HEK293T (cell line): ENCODE measurements at regions of chr15 and their contacts with region 1.

Region 1: GRCh38 chr15:92881802-92882696 is 18.1 kb upstream of the CHD2 start:
- DNase-seq: peak; percentile 99

Region 2: DNA sequence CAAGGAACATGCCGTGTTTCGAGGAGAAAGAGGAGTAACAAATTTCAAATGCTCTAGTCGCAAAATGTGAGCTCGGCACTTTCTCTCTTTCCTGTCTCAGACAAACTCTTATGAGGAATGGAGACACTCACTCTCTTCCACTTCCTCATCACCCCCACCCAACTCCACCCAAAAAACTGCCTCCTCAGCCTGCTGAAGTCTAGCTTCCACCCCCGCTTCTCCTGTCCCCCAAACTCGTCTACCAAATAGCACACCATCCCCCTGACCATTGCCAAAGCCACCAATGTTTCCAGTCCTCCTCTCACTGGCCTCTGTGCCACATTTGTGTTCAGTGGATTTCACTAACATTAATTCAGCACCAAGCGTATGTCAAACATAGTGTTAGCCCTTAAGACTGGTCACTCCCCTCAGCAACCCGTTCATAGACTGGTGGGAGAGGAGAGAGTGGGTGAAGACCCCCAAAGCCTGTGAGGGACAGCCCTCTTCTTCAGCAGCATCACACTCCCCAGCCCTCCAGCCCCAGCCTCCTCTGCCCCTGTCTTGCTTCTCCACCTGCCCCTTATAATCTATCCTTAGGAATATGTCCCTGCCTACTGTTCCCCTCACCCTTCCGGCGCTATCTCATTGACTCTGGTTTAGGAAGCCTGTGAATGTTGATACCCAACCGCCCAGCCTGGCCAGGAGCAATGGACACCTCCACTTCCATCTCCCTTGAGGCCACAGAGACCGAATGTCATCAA is 303.8 kb before region 1 on chr15:
- CTCF ChIA-PET with region 1: no interaction called
- POLR2A ChIA-PET with region 1: no interaction called
- DNase-seq: no peak

Region 3: DNA sequence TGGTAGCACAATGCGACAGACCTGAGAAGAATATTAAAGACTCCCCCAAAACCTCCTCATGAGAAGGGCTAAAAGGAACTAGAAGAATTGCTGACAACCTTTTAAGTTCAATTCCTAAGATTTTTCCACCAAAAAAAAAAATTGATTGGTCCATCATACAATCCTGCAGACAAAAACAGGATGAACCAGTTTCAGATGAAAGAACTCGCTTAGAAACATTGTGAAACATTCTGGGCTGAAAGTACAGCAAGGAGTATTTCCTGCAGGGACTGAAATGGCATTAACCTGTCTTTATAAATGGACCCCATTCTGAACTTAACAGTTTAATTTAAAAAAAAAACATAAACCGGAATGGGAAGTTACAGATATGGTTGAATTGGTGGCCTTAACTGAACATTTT is 130.5 kb before region 1 on chr15:
- CTCF ChIA-PET with region 1: no interaction called
- POLR2A ChIA-PET with region 1: no interaction called
- DNase-seq: no peak

Region 4: DNA sequence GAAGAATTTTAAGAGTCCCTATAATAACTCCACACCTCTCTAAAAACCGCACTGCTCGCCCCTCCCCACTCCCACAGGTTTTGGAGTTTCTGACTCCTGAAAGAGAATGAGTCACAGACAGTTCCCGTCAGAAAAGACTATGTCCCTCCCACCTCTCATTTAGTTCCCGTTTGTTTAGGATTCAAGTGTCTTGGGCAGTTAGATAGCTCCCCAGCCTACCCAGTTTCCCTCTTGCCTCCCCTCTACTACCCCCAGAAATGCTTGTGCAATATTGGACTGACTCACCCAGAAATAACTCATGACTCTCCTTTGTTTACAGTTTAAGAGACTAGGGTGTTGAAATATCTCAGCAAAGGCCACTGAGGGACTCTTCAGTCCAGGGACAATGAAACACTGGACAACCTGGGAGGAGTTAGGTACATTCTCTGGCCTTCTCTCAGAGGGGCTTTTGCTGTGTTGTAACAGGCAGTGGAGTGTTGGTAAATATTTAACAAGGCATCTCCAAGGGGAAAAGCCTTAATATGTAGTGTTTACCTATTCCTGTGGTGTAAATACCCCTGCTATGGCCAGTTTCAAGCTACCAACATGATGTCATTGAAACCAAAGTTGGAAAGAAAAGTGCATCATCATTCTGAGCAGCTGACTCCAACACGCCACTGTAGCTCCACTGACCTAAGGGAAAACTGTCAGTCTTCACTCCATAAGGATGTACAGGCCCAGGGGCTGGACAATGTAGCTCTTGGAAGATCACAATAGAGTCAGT is 78.0 kb before region 1 on chr15:
- CTCF ChIA-PET with region 1: interaction called, 7 read pairs
- POLR2A ChIA-PET with region 1: interaction called, 191 read pairs
- DNase-seq: no peak

Region 5: GRCh38 chr15:92820236-92821021 is 61.6 kb before region 1 on chr15:
- CTCF ChIA-PET with region 1: interaction called, 3 read pairs
- POLR2A ChIA-PET with region 1: interaction called, 341 read pairs
- DNase-seq: peak; percentile 95

Region 6: DNA sequence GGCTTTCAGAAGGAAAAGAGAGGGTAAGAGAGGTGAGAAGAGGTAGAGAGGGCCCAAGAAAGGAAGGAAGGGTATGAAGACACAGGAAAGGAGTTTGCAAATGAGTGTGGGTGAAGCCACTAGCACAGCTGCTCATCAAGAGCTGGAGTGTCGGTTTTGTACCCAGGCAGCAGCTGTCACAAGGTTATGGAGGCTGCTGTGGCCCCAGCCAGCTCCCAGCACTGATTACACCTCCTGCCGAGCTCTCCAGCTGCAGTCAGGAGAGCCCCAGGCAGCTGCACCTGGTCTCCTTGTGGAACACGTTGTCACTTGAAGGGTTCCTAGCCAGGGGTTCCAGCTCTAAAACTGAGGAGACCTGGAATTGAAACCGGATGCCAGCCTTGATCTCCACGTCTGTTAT is 42.4 kb before region 1 on chr15:
- CTCF ChIA-PET with region 1: no interaction called
- POLR2A ChIA-PET with region 1: interaction called, 172 read pairs
- DNase-seq: no peak

Region 7: GRCh38 chr15:92868992-92869988 is 12.8 kb before region 1 on chr15:
- CTCF ChIA-PET with region 1: no interaction called
- POLR2A ChIA-PET with region 1: interaction called, 35 read pairs
- DNase-seq: no peak

Region 8: DNA sequence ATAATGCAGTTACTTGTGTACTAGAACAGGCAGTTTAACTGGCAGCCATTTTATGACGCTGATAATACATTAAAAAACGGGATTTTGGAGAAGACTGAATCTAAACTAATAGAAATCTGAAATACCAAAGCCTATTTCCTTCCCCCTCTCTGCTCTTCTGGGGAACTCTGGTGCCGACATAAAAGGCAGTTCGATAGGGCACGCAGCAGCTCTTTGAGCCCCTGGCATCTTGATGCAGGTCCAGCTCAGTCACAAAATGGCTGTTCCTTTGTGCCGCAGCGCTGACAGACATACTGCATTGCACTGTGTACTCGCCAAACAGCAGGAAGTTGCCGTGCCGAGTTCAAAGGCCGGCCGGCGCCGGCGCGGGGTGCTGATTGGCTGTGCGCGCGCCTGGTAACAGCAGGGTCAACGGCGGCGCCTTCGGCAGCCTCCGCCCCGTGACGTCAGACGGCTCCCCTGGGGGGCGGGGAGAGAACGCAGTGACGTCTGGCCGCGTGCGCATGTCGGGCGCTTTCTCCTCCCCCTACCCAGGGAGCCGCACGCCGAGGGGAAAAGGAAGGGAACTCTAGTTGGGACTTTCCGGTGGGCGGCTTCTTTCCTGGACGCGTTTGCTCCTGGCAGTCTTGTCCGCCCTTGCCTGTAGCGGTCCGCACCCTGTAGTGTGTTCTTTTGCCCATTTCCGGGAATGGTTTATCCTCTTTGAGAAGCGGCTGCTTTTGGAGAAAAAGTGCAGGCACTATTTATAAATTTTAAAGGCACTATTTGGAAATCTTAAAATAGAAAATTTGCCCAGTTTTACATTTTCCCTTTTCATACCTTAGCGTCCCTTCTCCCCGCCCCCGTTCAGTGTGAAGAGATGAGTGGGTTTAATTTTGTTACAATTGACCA is 22.1 kb after region 1 on chr15:
- CTCF ChIA-PET with region 1: interaction called, 4 read pairs
- POLR2A ChIA-PET with region 1: interaction called, 252 read pairs
- DNase-seq: peak; percentile 92

Region 9: DNA sequence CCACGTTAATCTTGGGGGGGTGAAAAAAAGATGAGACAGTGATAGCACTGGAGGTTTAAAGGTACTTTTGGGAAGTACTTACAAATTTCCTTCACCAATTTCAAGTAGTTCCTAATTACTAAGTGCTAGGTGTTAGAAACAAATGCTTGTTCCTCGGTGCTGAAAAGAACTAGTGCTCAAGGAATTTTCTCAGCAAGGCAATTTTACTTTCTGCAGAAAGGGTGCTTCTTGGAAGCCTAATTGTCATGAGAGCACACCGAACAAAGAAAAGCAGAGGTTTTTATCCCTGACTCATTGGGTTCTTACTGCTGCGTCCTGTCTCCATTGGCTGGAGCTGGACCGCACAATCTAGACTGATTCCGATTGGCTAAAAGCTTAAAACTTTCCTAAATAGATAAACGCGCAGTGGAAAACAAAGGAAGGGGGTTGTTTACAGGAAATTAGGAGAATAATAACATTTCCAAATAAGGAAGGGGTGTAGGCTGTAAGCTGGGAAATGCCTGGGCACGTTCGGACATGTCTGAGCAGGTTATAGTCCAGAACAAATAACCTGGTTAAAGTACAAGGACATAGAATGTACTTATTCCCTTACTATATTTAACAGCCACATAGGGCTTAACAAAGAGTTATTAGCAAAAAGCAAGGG is 67.7 kb after region 1 on chr15:
- CTCF ChIA-PET with region 1: no interaction called
- POLR2A ChIA-PET with region 1: no interaction called
- DNase-seq: no peak

Region 10: DNA sequence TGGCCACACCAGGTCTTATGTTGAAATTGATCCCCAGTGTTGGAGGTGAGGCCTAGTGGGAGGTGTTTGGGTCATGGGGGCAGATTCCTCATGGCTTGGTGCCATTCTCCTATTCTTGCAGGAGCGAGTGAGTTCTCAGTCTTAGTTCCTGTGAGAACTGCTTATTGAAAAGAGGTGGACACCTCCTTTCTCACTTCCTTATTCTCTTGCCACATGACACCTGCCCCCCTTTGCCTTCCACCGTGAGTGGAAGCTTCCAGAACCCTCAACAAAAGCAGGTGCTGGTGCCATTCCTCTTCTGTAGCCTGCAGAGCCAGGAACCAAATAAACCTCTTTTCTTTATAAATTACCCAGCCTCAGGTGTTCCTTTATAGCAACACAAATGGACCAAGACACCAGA is 1031.3 kb after region 1 on chr15:
- CTCF ChIA-PET with region 1: no interaction called
- POLR2A ChIA-PET with region 1: no interaction called
- DNase-seq: no peak